Testis (tissue), 5 donors: ENCODE measurements at regions of chr3 and their contacts with region 1.

Region 1: GRCh38 chr3:194003125-194004057 is 132.6 kb upstream of the HES1 start:
- DNase-seq: peak; percentile 91
- H3K4me3 ChIP-seq: peak overlapping the region; percentile 31 to 42
- H3K27ac ChIP-seq: peak overlapping the region; percentile 32 to 72
- H3K4me1 ChIP-seq: peaks cover 26% of the 10 kb centered on the region
- H3K27me3 ChIP-seq: no peaks in the 10 kb centered on the region
- CTCF ChIP-seq: no peak
- POLR2A ChIP-seq: no peak

Region 2: DNA sequence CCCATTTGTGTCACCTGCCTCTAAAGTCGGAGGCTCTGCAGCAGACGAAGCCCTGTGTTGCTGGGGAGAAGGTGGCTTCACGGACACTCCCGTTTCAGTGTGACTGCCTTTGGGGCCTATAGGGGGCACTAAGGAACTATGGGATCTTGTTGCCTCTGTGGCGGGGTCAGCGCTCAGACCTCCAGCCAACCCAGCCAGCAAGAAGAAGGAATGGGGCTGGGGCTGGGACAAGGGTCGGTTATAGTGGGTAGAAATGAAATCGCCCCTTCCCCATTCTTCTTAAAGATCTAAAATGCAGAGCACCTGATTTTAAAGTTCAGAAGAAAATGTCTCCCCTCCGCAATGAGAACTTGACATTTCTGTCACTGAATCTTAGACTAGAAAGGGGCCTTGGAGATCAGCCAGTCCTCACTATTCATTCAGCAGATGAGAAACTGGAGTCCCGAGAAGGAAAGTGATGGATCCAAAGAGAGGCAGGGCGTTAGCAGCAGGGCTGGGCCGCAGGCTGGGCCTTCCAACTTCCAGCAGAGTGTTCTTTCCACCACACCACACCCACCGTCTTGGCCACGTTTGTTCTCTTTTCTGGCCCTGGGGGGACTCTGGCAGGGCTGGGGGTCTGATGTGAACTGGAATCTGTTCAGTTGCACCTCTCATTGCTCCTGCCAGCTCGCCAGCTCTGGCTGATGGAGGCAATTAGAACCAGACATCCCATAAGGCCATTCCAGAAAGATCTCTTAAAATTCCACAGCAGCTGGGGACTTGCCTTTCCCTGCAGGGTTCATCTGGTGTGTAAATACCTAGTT is 215.0 kb before region 1 on chr3:
- intact Hi-C with region 1: loop called (anchors 10 kb)
- DNase-seq: peak; percentile 68
- H3K4me3 ChIP-seq: no peak overlapping the region
- H3K27ac ChIP-seq: no peak overlapping the region
- H3K4me1 ChIP-seq: peaks cover 5% of the 10 kb centered on the region
- H3K27me3 ChIP-seq: no peaks in the 10 kb centered on the region
- CTCF ChIP-seq: peak; percentile 58 to 68 (median 64)
- POLR2A ChIP-seq: no peak

Region 3: DNA sequence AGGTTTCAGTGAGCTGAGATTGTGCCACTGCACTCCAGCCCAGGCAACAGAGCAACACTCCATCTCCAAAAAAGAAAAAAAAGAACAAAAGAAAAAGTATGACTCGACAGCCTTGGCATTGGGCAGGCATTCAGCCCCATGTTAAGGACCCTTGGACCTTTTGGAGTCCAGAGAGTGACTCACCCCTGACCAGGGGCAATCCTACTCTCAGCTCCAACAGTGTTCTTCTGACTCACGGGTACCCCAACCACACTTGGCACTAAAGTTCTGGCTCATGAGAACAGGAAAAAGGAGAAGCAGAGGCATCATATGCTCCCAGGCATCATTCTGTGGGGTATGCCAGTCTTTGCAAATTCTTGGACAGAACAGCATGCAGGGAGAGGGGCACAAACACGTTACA is 119.8 kb before region 1 on chr3:
- intact Hi-C with region 1: no loop called
- DNase-seq: no peak
- H3K4me3 ChIP-seq: no peak overlapping the region
- H3K27ac ChIP-seq: no peak overlapping the region
- H3K4me1 ChIP-seq: peaks cover 8% of the 10 kb centered on the region
- H3K27me3 ChIP-seq: no peaks in the 10 kb centered on the region
- CTCF ChIP-seq: no peak
- POLR2A ChIP-seq: no peak

Region 4: GRCh38 chr3:194134757-194135528 is 131.6 kb after region 1 on chr3:
- intact Hi-C with region 1: loop called (anchors 2 kb)
- DNase-seq: peak; percentile 94
- H3K4me3 ChIP-seq: peak overlapping the region; percentile 57 to 73
- H3K27ac ChIP-seq: peak overlapping the region; percentile 87 to 93
- H3K4me1 ChIP-seq: peaks cover 49% of the 10 kb centered on the region
- H3K27me3 ChIP-seq: no peaks in the 10 kb centered on the region
- CTCF ChIP-seq: no peak
- POLR2A ChIP-seq: no peak

Region 5: GRCh38 chr3:194269610-194270145 is 266.3 kb after region 1 on chr3:
- intact Hi-C with region 1: loop called (anchors 10 kb)
- DNase-seq: peak; percentile 91
- H3K4me3 ChIP-seq: peak overlapping the region in 1 of 2 donors; percentile 37
- H3K27ac ChIP-seq: peak overlapping the region; percentile 64 to 74
- H3K4me1 ChIP-seq: peaks cover 41% of the 10 kb centered on the region
- H3K27me3 ChIP-seq: no peaks in the 10 kb centered on the region
- CTCF ChIP-seq: peak; percentile 50 to 57 (median 51)
- POLR2A ChIP-seq: no peak

Region 6: GRCh38 chr3:194323785-194324735 is 320.7 kb after region 1 on chr3:
- intact Hi-C with region 1: no loop called
- DNase-seq: peak; percentile 69
- H3K4me3 ChIP-seq: peak overlapping the region in 1 of 2 donors; percentile 17
- H3K27ac ChIP-seq: no peak overlapping the region
- H3K4me1 ChIP-seq: peaks cover 8% of the 10 kb centered on the region
- H3K27me3 ChIP-seq: no peaks in the 10 kb centered on the region
- CTCF ChIP-seq: no peak
- POLR2A ChIP-seq: no peak